OCI-LY7 (cell line): ENCODE measurements at regions of chr11 and their contacts with region 1.

Region 1: DNA sequence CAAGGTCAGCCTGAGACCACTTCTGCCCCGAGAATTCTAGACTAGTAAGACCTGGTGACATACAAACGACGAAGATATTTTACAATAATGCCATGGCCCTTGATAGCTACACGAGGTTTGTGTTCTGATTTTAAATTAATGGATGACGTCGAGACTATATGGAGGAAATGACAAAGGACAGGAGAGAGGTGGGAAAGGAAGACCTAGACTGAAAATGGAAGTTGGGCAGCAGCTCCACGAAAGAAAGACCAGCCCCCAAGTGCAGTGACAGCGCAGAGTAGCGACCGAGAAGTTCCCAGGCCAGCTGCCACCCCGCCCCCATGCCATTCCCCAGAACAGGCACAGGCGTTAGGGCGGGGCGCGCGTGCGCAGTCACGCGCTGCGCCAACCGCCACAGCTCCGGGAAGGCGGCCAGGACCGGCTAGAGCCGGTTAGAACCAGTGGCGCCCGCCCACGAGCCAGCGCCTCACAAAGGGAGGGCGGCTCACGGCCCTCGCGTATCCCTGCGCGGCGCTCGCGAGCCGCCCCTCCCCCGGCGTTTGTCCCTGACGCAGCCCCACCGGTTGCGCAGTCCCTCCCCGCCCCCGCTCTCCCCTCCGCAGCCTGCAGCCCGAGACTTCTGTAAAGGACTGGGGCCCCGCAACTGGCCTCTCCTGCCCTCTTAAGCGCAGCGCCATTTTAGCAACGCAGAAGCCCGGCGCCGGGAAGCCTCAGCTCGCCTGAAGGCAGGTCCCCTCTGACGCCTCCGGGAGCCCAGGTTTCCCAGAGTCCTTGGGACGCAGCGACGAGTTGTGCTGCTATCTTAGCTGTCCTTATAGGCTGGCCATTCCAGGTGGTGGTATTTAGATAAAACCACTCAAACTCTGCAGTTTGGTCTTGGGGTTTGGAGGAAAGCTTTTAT is 1.5 kb upstream of the MALAT1 start:
- DNase-seq: peak; percentile 99
- H3K4me3 ChIP-seq: peak overlapping the region; percentile 79
- H3K27ac ChIP-seq: peak overlapping the region; percentile 98
- H3K4me1 ChIP-seq: peaks cover 52% of the 10 kb centered on the region
- CTCF ChIP-seq: no peak

Region 2: GRCh38 chr11:65440831-65441499 is 56.4 kb before region 1 on chr11:
- CTCF ChIA-PET with region 1: no interaction called
- POLR2A ChIA-PET with region 1: interaction called, 32 read pairs
- intact Hi-C with region 1: no loop called
- DNase-seq: peak; percentile 91
- H3K4me3 ChIP-seq: peak overlapping the region; percentile 53
- H3K27ac ChIP-seq: peak overlapping the region; percentile 93
- H3K4me1 ChIP-seq: peaks cover 85% of the 10 kb centered on the region
- CTCF ChIP-seq: no peak